ENCODE measurements at regions of chr10 and their contacts with region 1.

Region 1: DNA sequence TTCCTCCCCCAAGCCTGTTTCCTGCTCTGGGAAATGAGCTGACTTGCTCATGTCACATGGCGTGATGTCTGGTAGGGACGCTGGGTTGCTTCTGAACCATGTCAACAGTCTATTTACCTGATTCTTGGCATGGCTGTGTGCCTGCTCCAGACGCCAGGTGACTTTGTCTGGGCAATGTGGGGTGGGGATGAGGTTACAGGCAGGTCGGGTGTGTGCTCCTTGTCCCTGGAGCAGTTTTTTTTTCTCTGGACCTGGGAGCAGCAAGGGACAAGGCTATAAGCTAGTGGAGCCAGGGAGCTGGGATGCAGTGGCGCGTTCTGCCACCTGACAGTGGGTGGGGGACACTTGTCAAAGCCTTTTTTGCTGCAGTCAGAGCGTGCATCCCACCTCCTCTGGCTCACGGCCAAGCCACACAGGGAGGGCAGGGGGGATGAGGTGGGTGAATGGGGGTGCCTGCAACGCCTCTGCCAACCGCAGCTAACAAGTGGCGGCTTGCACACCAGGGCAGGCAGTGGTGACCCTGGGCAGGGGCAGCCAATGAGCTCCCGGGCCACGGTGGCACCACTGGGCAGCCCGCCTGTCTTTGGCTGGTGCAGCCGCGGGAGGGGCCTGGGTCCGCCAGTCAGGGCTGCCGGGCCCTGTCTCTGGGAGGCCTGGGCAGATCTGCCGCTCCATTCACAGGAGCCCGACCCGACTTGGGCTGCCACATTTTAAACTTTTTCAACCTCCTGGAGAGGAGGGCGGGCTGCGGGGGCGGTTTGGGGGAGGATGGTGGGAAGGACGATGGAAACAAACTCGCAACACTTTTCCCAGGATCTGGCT is 22.9 kb downstream of the DNAJB12 start:
- DNase-seq: peak; percentile 90
- ATAC-seq: peak; percentile 31

Region 2: GRCh38 chr10:72215652-72216549 is 115.9 kb before region 1 on chr10 and contains the starts of genes ANAPC16 and ASCC1:
- intact Hi-C with region 1: loop called (anchors 10 kb)
- DNase-seq: peak; percentile 95
- ATAC-seq: peak; percentile 97
- total RNA-seq, gene ANAPC16: 76.1 TPM
- total RNA-seq, gene ASCC1: 37.4 TPM

Region 3: GRCh38 chr10:72274730-72275350 is 57.0 kb before region 1 on chr10:
- intact Hi-C with region 1: loop called (anchors 1 kb)
- DNase-seq: peak; percentile 89
- ATAC-seq: peak; percentile 37

Measured in sciatic nerve (tissue), 2 donors.